Common myeloid progenitor, CD34-positive (primary cell): ENCODE measurements at regions of chr14 and their contacts with region 1.

Region 1: GRCh38 chr14:21241218-21241819 is 27.9 kb downstream of the HNRNPC start:
- DNase-seq: peak; percentile 53 to 78 (median 65)
- H3K4me3 ChIP-seq: no peak overlapping the region
- H3K27ac ChIP-seq: no peak overlapping the region
- H3K4me1 ChIP-seq: no peaks in the 10 kb centered on the region
- H3K27me3 ChIP-seq: no peaks in the 10 kb centered on the region

Region 2: GRCh38 chr14:21229821-21230220 is 11.5 kb before region 1 on chr14:
- CTCF ChIA-PET with region 1: interaction called, 13 read pairs
- POLR2A ChIA-PET with region 1: no interaction called
- DNase-seq: peak; percentile 18 to 54 (median 27)
- H3K4me3 ChIP-seq: no peak overlapping the region
- H3K27ac ChIP-seq: peak overlapping the region in 1 of 2 experiments; percentile 6
- H3K4me1 ChIP-seq: peaks cover 0 to 2% (median 0%) of the 10 kb centered on the region in 4 experiments
- H3K27me3 ChIP-seq: no peaks in the 10 kb centered on the region

Region 3: DNA sequence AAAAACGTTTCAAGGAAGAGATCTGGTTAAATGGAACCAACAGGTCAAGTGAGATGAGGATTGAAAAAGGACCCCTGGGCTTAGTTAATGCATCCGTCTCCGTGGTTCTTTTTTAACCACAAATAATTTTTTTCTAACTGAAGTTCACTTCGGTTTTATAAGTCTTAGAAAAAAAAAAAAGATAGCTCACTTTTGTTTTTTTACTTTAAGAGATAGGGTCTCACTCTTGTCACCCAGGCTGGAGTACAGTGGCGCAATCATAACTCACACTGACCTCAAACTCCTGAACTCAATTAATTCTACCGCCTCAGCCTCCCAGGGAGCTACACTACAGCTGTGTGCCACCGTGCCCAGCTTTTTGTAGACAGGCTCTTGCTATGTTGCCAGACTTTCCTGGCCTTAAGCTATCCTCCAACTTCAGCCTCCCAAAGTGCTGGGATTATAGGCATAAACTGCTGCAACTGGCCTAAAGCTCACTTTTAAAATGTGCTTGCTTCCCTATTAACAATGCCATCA is 16.1 kb after region 1 on chr14:
- CTCF ChIA-PET with region 1: interaction called, 18 read pairs
- POLR2A ChIA-PET with region 1: interaction called, 4 read pairs
- DNase-seq: peak in 2 of 3 donors; percentile 47 to 62
- H3K4me3 ChIP-seq: peak overlapping the region in 2 of 7 experiments; percentile 26 to 28
- H3K27ac ChIP-seq: peak overlapping the region in 1 of 2 experiments; percentile 32
- H3K4me1 ChIP-seq: peaks cover 10 to 39% (median 17%) of the 10 kb centered on the region in 4 experiments
- H3K27me3 ChIP-seq: no peaks in the 10 kb centered on the region